A549 (cell line): ENCODE measurements at regions of chr2 and their contacts with region 1.

Region 1: GRCh38 chr2:27683390-27684071 is 19.8 kb downstream of the SLC4A1AP start:
- DNase-seq: peak; percentile 60 to 95
- ATAC-seq: peak; percentile 81 to 92
- H3K4me3 ChIP-seq: no peak overlapping the region
- H3K27ac ChIP-seq: peak overlapping the region; percentile 52 to 78
- H3K4me1 ChIP-seq: peaks cover 31% of the 10 kb centered on the region
- CTCF ChIP-seq: peak; percentile 100
- EP300 ChIP-seq: no peak
- POLR2A ChIP-seq: no peak
- RAD21 ChIP-seq: peak; percentile 94 to 95

Region 2: GRCh38 chr2:27647289-27647688 is 36.2 kb before region 1 on chr2:
- CTCF ChIA-PET with region 1: interaction called, 36 read pairs
- POLR2A ChIA-PET with region 1: no interaction called
- DNase-seq: no peak
- ATAC-seq: peak; percentile 34 to 36; a peak in 1 of 6 replicates
- H3K4me3 ChIP-seq: no peak overlapping the region
- H3K27ac ChIP-seq: no peak overlapping the region
- H3K4me1 ChIP-seq: no peaks in the 10 kb centered on the region
- CTCF ChIP-seq: no peak
- EP300 ChIP-seq: no peak
- POLR2A ChIP-seq: no peak
- RAD21 ChIP-seq: no peak

Region 3: GRCh38 chr2:27672723-27673486 is 10.6 kb before region 1 on chr2:
- CTCF ChIA-PET with region 1: interaction called, 118 read pairs
- POLR2A ChIA-PET with region 1: no interaction called
- DNase-seq: no peak
- ATAC-seq: no peak
- H3K4me3 ChIP-seq: no peak overlapping the region
- H3K27ac ChIP-seq: no peak overlapping the region
- H3K4me1 ChIP-seq: no peaks in the 10 kb centered on the region
- CTCF ChIP-seq: no peak
- EP300 ChIP-seq: no peak
- POLR2A ChIP-seq: no peak
- RAD21 ChIP-seq: no peak

Region 4: GRCh38 chr2:27723372-27724144 is 40.0 kb after region 1 on chr2:
- CTCF ChIA-PET with region 1: interaction called, 21 read pairs
- POLR2A ChIA-PET with region 1: no interaction called
- DNase-seq: peak; percentile 83 to 92
- ATAC-seq: peak; percentile 51 to 77
- H3K4me3 ChIP-seq: no peak overlapping the region
- H3K27ac ChIP-seq: peak overlapping the region; percentile 93 to 98
- H3K4me1 ChIP-seq: peaks cover 65% of the 10 kb centered on the region
- CTCF ChIP-seq: peak; percentile 78
- EP300 ChIP-seq: peak; percentile 36 to 62; a peak in 2 of 5 replicates
- POLR2A ChIP-seq: no peak
- RAD21 ChIP-seq: peak; percentile 82 to 86

Region 5: GRCh38 chr2:28413142-28413898 is 729.8 kb after region 1 on chr2:
- CTCF ChIA-PET with region 1: interaction called, 16 read pairs
- POLR2A ChIA-PET with region 1: no interaction called
- DNase-seq: peak in 1 of 2 experiments; percentile 51
- ATAC-seq: peak; percentile 40 to 63; a peak in 5 of 6 replicates
- H3K4me3 ChIP-seq: no peak overlapping the region
- H3K27ac ChIP-seq: peak overlapping the region in 1 of 2 experiments; percentile 38; a peak in 3 of 6 replicates
- H3K4me1 ChIP-seq: peaks cover 45% of the 10 kb centered on the region
- CTCF ChIP-seq: no peak
- EP300 ChIP-seq: no peak
- POLR2A ChIP-seq: no peak
- RAD21 ChIP-seq: peak in 1 of 2 experiments; percentile 29; a peak in 1 of 5 replicates

Region 6: DNA sequence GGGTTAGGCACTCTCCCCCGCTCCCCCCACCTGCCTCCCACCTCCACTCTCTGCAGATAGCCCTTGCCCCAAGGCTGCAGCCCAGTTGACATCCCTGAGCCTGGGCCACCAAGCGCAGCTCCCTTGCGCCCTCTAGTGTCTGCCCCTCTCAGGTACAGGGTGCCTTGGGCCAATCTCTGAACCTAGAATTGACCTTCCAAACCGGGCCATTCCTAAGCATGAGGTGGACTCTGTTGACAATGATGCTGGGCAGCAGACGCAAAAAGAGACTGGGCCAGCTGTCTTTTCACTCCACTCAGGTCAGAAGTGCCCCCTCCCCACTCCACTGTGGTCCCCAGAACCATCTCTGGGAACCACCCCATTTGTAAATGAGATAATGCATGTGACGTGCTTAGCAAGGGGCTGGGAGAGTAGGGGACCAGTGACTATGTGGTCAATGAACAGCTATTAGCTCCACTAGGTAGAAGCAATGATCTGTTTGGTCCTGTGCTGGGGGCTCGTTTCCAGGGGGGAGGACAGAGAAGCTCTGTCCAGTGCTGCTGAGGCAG is 769.1 kb after region 1 on chr2:
- CTCF ChIA-PET with region 1: interaction called, 14 read pairs
- POLR2A ChIA-PET with region 1: no interaction called
- DNase-seq: peak; percentile 65 to 70
- ATAC-seq: peak; percentile 75 to 92
- H3K4me3 ChIP-seq: no peak overlapping the region
- H3K27ac ChIP-seq: peak overlapping the region; percentile 70 to 87
- H3K4me1 ChIP-seq: peaks cover 44% of the 10 kb centered on the region
- CTCF ChIP-seq: peak; percentile 94
- EP300 ChIP-seq: no peak
- POLR2A ChIP-seq: no peak
- RAD21 ChIP-seq: peak; percentile 98 to 99